Activated B cell treated with CpG ODN at 0.5 μM for 24 hours (primary cell): ENCODE measurements at regions of chr6 and their contacts with region 1.

Region 1: DNA sequence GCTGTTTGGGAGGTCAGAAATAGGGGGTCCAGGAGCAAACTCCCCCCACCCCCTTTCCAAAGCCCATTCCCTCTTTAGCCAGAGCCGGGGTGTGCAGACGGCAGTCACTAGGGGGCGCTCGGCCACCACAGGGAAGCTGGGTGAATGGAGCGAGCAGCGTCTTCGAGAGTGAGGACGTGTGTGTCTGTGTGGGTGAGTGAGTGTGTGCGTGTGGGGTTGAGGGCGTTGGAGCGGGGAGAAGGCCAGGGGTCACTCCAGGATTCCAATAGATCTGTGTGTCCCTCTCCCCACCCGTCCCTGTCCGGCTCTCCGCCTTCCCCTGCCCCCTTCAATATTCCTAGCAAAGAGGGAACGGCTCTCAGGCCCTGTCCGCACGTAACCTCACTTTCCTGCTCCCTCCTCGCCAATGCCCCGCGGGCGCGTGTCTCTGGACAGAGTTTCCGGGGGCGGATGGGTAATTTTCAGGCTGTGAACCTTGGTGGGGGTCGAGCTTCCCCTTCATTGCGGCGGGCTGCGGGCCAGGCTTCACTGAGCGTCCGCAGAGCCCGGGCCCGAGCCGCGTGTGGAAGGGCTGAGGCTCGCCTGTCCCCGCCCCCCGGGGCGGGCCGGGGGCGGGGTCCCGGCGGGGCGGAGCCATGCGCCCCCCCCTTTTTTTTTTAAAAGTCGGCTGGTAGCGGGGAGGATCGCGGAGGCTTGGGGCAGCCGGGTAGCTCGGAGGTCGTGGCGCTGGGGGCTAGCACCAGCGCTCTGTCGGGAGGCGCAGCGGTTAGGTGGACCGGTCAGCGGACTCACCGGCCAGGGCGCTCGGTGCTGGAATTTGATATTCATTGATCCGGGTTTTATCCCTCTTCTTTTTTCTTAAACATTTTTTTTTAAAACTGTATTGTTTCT is at the start of gene VEGFA:
- DNase-seq: peak; percentile 85
- ATAC-seq: peak; percentile 71
- H3K4me3 Mint-ChIP-seq: peak within 1 kb of the TSS; percentile 94
- H3K27ac Mint-ChIP-seq: peak within 1 kb of the TSS; percentile 86
- H3K4me1 Mint-ChIP-seq: peaks cover 27% of the 10 kb centered on the region
- H3K27me3 Mint-ChIP-seq: peaks cover 16% of the 10 kb centered on the region
- CTCF ChIP-seq: peak; percentile 85
- total RNA-seq, gene VEGFA: 29.0 and 31.3 TPM in 2 replicates

Region 2: GRCh38 chr6:43516697-43517504 is 252.9 kb before region 1 on chr6 and contains the starts of genes POLR1C and YIPF3:
- CTCF ChIA-PET with region 1: no interaction called
- POLR2A ChIA-PET with region 1: no interaction called
- intact Hi-C with region 1: loop called (anchors 2 kb)
- DNase-seq: peak; percentile 87
- ATAC-seq: peak; percentile 94
- H3K4me3 Mint-ChIP-seq: no peak within 1 kb of the TSS
- H3K27ac Mint-ChIP-seq: peak within 1 kb of the TSS; percentile 54
- H3K4me1 Mint-ChIP-seq: peaks cover 29% of the 10 kb centered on the region
- H3K27me3 Mint-ChIP-seq: no peaks in the 10 kb centered on the region
- CTCF ChIP-seq: no peak
- total RNA-seq, gene POLR1C: 67.7 and 75.6 TPM in 2 replicates
- total RNA-seq, gene YIPF3: 51.7 and 59.1 TPM in 2 replicates

Region 3: DNA sequence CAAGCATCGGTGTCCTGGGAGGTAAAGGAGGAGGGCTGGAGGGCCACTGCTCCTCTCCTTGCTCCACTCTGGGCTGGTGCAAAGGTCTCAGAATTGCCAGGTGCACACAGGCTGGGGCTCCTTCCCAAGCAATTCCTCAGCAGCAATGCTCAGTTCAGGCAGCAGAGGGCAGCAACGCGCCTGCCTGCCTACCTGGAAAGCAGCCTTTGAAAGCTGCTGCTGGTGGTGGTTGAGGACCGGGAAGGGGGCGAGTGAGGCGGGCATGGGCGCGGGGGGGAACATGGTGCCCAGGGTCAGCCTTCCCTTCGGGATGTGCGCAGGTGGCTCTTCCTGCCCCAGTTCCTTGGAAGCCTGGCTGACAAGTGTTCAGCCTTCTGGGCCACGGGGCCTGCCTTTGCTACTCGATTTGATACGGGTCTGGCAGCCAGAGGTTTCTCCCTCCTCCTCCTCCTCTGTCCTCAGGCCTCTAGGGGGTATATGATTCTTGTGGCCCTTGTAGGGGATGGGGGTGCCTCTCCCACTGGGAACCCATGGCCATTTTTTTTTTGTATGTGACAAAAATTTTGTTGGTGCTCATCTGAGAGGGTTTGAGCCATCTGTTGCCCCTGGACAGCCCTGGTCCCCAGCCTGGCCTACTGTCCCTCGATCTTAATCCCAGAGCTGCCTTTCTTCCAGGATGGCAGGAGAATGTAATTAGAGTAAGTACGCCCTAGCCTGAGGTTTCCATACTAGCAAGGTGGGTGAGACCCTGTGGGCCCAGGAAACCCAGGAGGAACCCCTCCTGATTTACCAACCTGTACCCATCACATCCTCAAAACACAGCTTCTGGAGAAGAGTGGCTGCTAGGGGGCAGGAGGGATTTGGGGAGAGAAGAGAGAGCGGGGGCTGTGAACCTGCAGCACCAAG is 102.3 kb before region 1 on chr6:
- CTCF ChIA-PET with region 1: interaction called, 99 read pairs
- POLR2A ChIA-PET with region 1: interaction called, 30 read pairs
- intact Hi-C with region 1: loop called (anchors 1 kb)
- DNase-seq: peak; percentile 84
- ATAC-seq: peak; percentile 80
- H3K4me3 Mint-ChIP-seq: peak overlapping the region; percentile 36
- H3K27ac Mint-ChIP-seq: peak overlapping the region; percentile 64
- H3K4me1 Mint-ChIP-seq: peaks cover 18% of the 10 kb centered on the region
- H3K27me3 Mint-ChIP-seq: no peaks in the 10 kb centered on the region
- CTCF ChIP-seq: peak; percentile 42

Region 4: DNA sequence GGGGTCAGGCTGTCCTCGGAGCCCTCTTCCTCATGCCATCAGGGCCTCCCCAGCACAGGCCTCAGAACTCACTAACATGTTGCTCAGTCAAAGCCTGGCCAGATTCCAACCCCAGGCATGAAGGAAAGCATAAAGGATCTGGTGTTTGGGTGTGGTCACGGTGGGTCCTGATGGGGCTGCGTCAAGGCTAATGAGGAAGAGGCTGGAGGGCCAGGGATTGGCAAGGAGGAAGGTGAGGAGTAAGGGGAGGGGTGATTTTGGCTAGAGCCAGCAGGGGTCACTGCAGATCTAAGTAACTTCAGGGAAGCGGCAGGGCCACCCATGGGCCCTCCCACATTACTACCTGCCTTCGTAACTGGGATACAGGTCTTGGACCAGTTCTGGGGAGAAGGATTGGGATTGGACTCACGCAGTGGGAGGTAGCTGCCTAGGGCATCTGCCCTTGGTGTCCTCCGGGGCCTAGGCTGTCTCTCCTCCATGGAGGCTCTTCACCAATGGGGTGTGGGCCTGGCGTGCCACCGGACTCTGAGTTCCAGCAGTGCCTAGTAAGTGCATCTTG is 46.0 kb before region 1 on chr6:
- CTCF ChIA-PET with region 1: interaction called, 15 read pairs
- POLR2A ChIA-PET with region 1: interaction called, 24 read pairs
- intact Hi-C with region 1: loop called (anchors 1 kb)
- DNase-seq: peak; percentile 46
- ATAC-seq: peak; percentile 74
- H3K4me3 Mint-ChIP-seq: no peak overlapping the region
- H3K27ac Mint-ChIP-seq: no peak overlapping the region
- H3K4me1 Mint-ChIP-seq: peaks cover 27% of the 10 kb centered on the region
- H3K27me3 Mint-ChIP-seq: peaks cover 5% of the 10 kb centered on the region
- CTCF ChIP-seq: peak; percentile 36

Region 5: GRCh38 chr6:44074439-44075136 is 304.8 kb after region 1 on chr6:
- CTCF ChIA-PET with region 1: interaction called, 50 read pairs
- POLR2A ChIA-PET with region 1: interaction called, 9 read pairs
- intact Hi-C with region 1: loop called (anchors 1 kb)
- DNase-seq: peak; percentile 56
- ATAC-seq: peak; percentile 60
- H3K4me3 Mint-ChIP-seq: peak overlapping the region; percentile 66
- H3K27ac Mint-ChIP-seq: peak overlapping the region; percentile 7
- H3K4me1 Mint-ChIP-seq: peaks cover 20% of the 10 kb centered on the region
- H3K27me3 Mint-ChIP-seq: peaks cover 30% of the 10 kb centered on the region
- CTCF ChIP-seq: peak; percentile 21

Region 6: GRCh38 chr6:44265007-44265721 is 495.4 kb after region 1 on chr6 and contains the start of gene NFKBIE:
- CTCF ChIA-PET with region 1: no interaction called
- POLR2A ChIA-PET with region 1: no interaction called
- intact Hi-C with region 1: loop called (anchors 2 kb)
- DNase-seq: peak; percentile 99
- ATAC-seq: peak; percentile 50
- H3K4me3 Mint-ChIP-seq: peak within 1 kb of the TSS; percentile 100
- H3K27ac Mint-ChIP-seq: peak within 1 kb of the TSS; percentile 99
- H3K4me1 Mint-ChIP-seq: peaks cover 77% of the 10 kb centered on the region
- H3K27me3 Mint-ChIP-seq: peaks cover 4% of the 10 kb centered on the region
- CTCF ChIP-seq: no peak
- total RNA-seq, gene NFKBIE: 94.7 and 99.2 TPM in 2 replicates